WTC11 (cell line): ENCODE measurements at regions of chr9 and their contacts with region 1.

Region 1: DNA sequence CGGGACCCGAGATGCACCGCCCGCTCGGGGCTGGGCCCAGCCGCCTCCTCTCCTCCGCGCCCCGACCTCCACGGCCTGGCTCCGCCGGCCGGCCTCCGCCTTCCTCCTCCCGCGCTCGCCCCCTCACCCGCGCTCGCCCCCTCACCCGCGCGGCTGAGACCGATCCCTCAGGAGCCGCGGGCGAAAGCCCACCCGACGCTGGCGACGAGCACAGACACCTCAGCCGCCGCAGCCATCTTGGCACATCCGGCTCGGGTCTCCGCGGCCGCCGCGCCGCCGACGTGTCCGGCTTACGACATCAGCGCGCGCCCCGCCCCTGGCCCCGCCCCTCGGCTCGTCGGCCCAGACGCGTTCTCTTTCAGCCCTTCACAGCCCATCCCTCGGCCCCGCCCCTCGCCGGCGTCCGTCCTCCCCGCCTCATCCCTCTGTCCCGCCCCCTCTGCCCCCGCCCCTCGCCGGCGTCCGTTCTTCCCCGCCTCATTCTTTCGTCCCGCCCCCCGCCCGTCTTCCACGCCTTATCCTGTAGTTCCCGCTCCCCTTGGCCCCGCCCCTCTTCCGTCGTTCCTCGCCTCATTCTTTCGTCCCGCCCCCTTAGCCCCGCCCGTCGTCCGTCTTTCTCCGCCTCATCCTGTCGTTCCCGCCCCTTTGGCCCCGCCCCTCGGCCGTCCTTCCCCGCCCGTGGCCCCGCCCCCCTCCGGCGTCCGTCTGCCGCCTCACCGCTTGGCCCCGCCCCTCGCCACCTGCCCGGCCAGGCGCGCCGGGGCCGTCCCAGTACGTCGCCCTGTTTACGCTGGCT is at the start of gene SEC16A:
- DNase-seq: peak; percentile 99
- ATAC-seq: peak; percentile 78
- H3K4me3 Mint-ChIP-seq: peak within 1 kb of the TSS; percentile 87
- H3K27ac Mint-ChIP-seq: peak within 1 kb of the TSS; percentile 98
- H3K4me1 Mint-ChIP-seq: peaks cover 15% of the 10 kb centered on the region
- H3K27me3 Mint-ChIP-seq: no peaks in the 10 kb centered on the region
- CTCF ChIP-seq: no peak
- total RNA-seq, gene SEC16A: 52.1 to 70.9 TPM (median 52.3 TPM) in 3 replicates

Region 2: DNA sequence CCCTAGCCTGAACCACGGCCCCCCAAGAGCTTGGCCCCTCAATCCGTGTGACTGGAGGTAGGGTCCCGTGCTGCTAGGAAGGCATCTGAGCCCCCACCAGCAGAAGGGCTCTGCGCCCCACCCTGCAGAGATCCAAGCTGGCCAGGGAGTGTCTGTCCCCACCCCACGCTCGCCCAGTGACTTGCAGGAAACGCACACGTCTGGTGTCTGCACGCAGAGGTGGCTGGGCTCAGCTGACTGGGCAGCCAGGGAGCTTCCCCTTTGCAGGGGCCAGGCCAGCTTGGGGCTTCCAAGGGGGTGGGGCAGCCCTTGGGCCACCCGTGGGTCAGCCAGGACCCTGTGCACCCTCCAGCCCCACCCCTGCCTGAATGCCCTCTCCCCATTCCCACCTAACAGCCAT is 38.5 kb after region 1 on chr9:
- CTCF ChIA-PET with region 1: interaction called, 3 read pairs
- POLR2A ChIA-PET with region 1: interaction called, 10 read pairs
- DNase-seq: no peak
- ATAC-seq: no peak
- H3K4me3 Mint-ChIP-seq: no peak overlapping the region
- H3K27ac Mint-ChIP-seq: no peak overlapping the region
- H3K4me1 Mint-ChIP-seq: 0 out of 2 replicates have a peak, but pooled peaks cover 2% of the 10 kb centered on the region
- H3K27me3 Mint-ChIP-seq: no peaks in the 10 kb centered on the region
- CTCF ChIP-seq: no peak

Region 3: GRCh38 chr9:136587145-136587943 is 104.4 kb after region 1 on chr9:
- CTCF ChIA-PET with region 1: interaction called, 15 read pairs
- POLR2A ChIA-PET with region 1: no interaction called
- DNase-seq: peak; percentile 86
- ATAC-seq: peak; percentile 58
- H3K4me3 Mint-ChIP-seq: peak overlapping the region; percentile 29
- H3K27ac Mint-ChIP-seq: no peak overlapping the region; the same call in 1 of the 2 replicates
- H3K4me1 Mint-ChIP-seq: peaks cover 39% of the 10 kb centered on the region
- H3K27me3 Mint-ChIP-seq: no peaks in the 10 kb centered on the region; the same call in 1 of the 2 replicates
- CTCF ChIP-seq: no peak

Region 4: GRCh38 chr9:136631038-136632000 is 148.3 kb after region 1 on chr9:
- CTCF ChIA-PET with region 1: interaction called, 163 read pairs
- POLR2A ChIA-PET with region 1: no interaction called
- DNase-seq: peak; percentile 78
- ATAC-seq: peak; percentile 57
- H3K4me3 Mint-ChIP-seq: no peak overlapping the region
- H3K27ac Mint-ChIP-seq: no peak overlapping the region
- H3K4me1 Mint-ChIP-seq: no peaks in the 10 kb centered on the region
- H3K27me3 Mint-ChIP-seq: no peaks in the 10 kb centered on the region
- CTCF ChIP-seq: 0 out of 2 replicates have a peak, but pooled peaks have one; percentile 51